ENCODE measurements at regions of chr3 and their contacts with region 1.

Region 1: GRCh38 chr3:155701882-155702465 is 42.9 kb downstream of the PLCH1 start:
- DNase-seq: no peak
- ATAC-seq: peak; percentile 59
- H3K4me3 Mint-ChIP-seq: no peak overlapping the region
- H3K27ac Mint-ChIP-seq: no peak overlapping the region
- H3K4me1 Mint-ChIP-seq: peaks cover 32% of the 10 kb centered on the region
- H3K27me3 Mint-ChIP-seq: no peaks in the 10 kb centered on the region
- CTCF ChIP-seq: peak; percentile 63

Region 2: DNA sequence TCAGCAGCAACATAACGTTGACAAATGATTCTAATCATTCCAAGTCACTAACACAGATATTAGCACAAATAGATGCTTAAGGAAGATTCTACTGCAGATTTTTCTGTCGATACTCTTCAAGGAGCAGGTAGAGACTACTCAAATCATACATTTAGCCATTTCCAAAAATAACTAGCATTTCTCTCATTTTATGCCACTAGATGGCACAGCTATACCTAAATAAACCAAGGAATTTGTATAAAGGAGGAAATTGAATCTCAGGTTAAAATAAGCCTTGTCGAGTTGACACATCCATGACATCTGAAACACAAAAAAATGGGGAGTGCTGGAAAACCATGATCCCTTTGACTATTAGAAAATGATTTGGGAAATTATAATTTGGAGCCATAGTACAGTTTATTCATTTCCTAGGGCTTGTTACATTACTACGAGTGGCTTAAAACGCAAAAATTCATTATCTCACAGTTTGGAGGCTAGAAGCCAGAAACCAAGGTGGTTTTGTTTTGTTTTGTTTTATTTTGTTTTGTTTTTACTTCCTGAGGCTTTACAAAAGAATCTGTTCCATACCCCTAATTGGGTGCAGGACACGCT is 349.0 kb before region 1 on chr3:
- CTCF ChIA-PET with region 1: interaction called, 42 read pairs
- POLR2A ChIA-PET with region 1: no interaction called
- DNase-seq: no peak
- ATAC-seq: no peak
- H3K4me3 Mint-ChIP-seq: no peak overlapping the region
- H3K27ac Mint-ChIP-seq: no peak overlapping the region
- H3K4me1 Mint-ChIP-seq: peaks cover 28% of the 10 kb centered on the region
- H3K27me3 Mint-ChIP-seq: peaks cover 29% of the 10 kb centered on the region
- CTCF ChIP-seq: peak; percentile 18; the same call in 1 of the 2 replicates

Region 3: DNA sequence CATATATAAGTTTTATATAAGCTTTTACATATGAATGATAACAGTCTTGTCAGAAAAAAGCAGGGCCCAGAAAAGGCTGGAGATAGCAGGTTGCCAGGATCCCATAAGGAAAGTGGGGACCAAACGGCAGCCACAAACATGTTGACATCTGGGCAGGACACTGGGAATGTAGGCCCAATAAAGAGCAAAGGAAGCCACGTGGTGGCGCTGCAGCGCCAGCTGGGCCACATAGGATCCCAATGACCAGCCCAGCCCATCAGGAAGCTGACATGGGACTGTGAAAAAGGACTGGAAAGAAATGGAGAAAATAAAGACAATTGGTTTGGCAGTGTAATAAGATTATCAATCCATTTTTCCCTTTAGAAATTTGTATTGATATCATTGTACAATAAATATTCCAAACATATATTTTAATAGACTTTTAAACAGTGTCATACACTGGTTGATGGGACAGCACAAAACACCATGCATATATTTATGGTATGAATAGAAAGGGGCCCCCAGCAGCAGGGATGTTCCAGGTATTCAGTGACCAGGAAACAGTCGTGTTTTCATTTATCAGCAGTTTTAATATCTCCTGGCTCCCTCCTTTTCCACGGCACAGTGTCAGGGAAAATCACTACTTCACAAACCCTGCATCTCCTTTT is 319.5 kb before region 1 on chr3:
- CTCF ChIA-PET with region 1: interaction called, 68 read pairs
- POLR2A ChIA-PET with region 1: no interaction called
- DNase-seq: peak; percentile 89
- ATAC-seq: peak; percentile 97
- H3K4me3 Mint-ChIP-seq: no peak overlapping the region
- H3K27ac Mint-ChIP-seq: no peak overlapping the region
- H3K4me1 Mint-ChIP-seq: peaks cover 24% of the 10 kb centered on the region
- H3K27me3 Mint-ChIP-seq: no peaks in the 10 kb centered on the region
- CTCF ChIP-seq: peak; percentile 56; the same call in 1 of the 2 replicates

Region 4: DNA sequence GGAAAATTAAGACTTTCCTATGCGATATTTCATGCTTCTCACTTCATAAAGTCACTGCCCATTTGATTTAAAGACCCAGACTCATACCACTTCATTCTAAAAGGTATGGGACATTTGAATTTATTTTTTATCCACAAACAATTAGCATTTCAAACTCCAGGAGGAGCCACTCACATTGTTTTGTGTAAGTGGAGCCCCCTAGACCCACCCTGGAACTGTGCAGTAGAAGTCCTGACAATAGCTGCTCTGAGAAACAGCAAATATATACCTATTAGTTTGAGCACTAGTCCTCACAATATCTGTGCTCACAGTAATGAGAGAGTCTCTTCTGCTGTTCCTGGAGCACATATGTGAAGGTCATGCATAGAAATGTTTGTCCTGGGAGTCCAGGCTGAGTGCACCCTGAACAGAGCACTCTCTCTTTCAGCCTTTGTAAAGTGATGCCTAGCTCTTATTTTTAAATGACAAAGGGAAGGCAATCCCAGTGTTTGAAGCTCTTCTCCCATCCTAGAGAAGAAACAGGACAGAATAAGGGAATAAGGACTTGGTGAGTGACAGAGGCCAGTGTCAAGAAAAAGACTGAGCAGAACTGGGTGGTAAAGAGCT is 281.0 kb before region 1 on chr3:
- CTCF ChIA-PET with region 1: interaction called, 14 read pairs
- POLR2A ChIA-PET with region 1: no interaction called
- DNase-seq: no peak
- ATAC-seq: peak; percentile 76
- H3K4me3 Mint-ChIP-seq: no peak overlapping the region
- H3K27ac Mint-ChIP-seq: peak overlapping the region; percentile 16; the same call in 1 of the 2 replicates
- H3K4me1 Mint-ChIP-seq: peaks cover 39% of the 10 kb centered on the region
- H3K27me3 Mint-ChIP-seq: no peaks in the 10 kb centered on the region; the same call in 1 of the 2 replicates
- CTCF ChIP-seq: no peak

Region 5: GRCh38 chr3:155585384-155585783 is 116.6 kb before region 1 on chr3:
- CTCF ChIA-PET with region 1: interaction called, 11 read pairs
- POLR2A ChIA-PET with region 1: no interaction called
- DNase-seq: no peak
- ATAC-seq: peak; percentile 80
- H3K4me3 Mint-ChIP-seq: no peak overlapping the region
- H3K27ac Mint-ChIP-seq: no peak overlapping the region
- H3K4me1 Mint-ChIP-seq: peaks cover 18% of the 10 kb centered on the region
- H3K27me3 Mint-ChIP-seq: no peaks in the 10 kb centered on the region
- CTCF ChIP-seq: no peak

Region 6: DNA sequence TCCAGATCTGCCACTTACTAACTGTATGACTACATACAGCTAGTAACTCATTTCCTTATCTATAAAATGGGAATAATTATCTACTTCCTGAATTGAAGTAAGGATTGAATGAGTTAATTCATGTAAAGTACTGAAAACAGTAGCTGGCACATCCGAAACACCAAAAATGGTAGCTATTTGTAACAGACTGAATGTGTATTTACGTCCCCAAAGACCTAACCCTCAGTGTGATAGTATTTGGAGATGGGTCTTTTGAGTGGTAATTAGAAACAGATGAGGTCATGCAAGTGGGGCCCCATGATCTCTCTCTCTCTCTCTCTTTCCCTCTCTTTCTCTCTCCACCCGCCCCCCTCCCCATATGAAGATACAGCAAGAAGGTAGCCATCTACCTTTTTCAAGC is 103.3 kb before region 1 on chr3:
- CTCF ChIA-PET with region 1: no interaction called
- POLR2A ChIA-PET with region 1: no interaction called
- DNase-seq: no peak
- ATAC-seq: no peak
- H3K4me3 Mint-ChIP-seq: no peak overlapping the region
- H3K27ac Mint-ChIP-seq: no peak overlapping the region
- H3K4me1 Mint-ChIP-seq: peaks cover 14% of the 10 kb centered on the region
- H3K27me3 Mint-ChIP-seq: no peaks in the 10 kb centered on the region
- CTCF ChIP-seq: no peak

Region 7: GRCh38 chr3:155664925-155665695 is 36.9 kb before region 1 on chr3:
- CTCF ChIA-PET with region 1: no interaction called
- POLR2A ChIA-PET with region 1: no interaction called
- DNase-seq: no peak
- ATAC-seq: peak; percentile 57
- H3K4me3 Mint-ChIP-seq: no peak overlapping the region
- H3K27ac Mint-ChIP-seq: peak overlapping the region; percentile 38
- H3K4me1 Mint-ChIP-seq: peaks cover 19% of the 10 kb centered on the region
- H3K27me3 Mint-ChIP-seq: no peaks in the 10 kb centered on the region
- CTCF ChIP-seq: no peak